ENCODE measurements at regions of chr22 and their contacts with region 1.

Region 1: DNA sequence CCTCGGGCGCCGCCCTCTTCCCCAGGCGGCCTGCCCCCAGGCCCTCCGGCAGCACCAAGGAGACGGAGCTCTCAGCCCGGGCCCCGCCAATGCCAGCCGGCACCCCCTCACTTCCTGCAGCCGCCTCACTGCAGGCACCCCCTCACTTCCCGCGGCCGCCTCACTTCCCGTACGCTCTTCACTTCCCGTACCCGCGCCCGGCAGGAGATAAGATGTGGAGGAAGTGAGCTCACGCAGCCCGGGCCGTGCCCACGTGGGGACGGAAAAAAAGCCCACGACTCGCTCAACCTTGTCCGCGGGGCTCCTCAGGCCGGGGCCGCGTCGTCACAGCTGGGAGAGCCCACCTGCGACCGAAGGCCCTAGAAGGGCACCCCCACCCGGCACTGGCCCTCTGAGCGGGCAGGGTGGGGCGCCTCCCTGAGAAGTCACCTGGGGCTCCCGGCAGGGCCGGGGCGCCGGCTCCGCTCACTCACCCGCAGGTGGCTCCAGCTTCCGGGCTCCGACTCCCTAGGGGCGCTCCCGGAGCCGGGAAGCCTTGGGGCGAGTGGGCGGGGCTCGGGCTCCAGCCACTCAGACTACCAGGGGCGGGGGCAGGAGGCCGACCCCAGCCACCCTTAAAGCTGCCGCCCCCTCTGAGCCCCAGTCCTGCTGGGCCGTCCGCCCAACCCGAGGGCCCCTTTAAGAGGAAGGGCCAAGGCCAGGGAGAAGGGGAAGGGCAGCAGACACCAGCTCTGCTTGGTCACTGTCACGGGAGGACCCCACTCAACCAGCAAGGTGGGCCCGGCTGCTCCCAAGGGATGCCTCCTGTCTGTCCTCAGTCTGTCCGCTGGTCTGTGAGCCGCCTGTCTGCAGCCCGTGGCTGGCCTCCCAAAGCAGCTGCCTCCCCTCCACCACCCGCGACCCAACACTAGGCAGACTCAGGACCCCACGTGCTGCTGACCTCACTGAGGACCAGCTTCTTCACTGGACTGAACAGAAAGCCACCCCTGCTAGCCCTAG is 31.4 kb downstream of the PISD start:
- DNase-seq: peak; percentile 44 to 83 (median 76)
- H3K4me3 ChIP-seq: peak overlapping the region; percentile 61 to 95 (median 80)
- H3K27ac ChIP-seq: peak overlapping the region; percentile 49 to 97 (median 87)
- H3K27me3 ChIP-seq: no peaks in the 10 kb centered on the region
- CTCF ChIP-seq: peak in 16 of 56 donors; percentile 3 to 28 (median 12)

Region 2: GRCh38 chr22:31345331-31346254 is 285.0 kb before region 1 on chr22:
- intact Hi-C with region 1: loop called (anchors 10 kb)
- DNase-seq: peak; percentile 58 to 86 (median 79)
- H3K4me3 ChIP-seq: peak overlapping the region; percentile 54 to 93 (median 79)
- H3K27ac ChIP-seq: peak overlapping the region; percentile 14 to 98 (median 94)
- H3K27me3 ChIP-seq: no peaks in the 10 kb centered on the region
- CTCF ChIP-seq: peak; percentile 25 to 95 (median 74)

Region 3: GRCh38 chr22:31399211-31400028 is 231.2 kb before region 1 on chr22 and contains the start of gene DRG1:
- intact Hi-C with region 1: loop called in 1 of 2 experiments (anchors 10 kb)
- DNase-seq: peak; percentile 96 to 99 (median 97)
- H3K4me3 ChIP-seq: peak within 1 kb of the TSS; percentile 67 to 100 (median 94)
- H3K27ac ChIP-seq: peak within 1 kb of the TSS; percentile 54 to 98 (median 90)
- H3K27me3 ChIP-seq: no peaks in the 10 kb centered on the region
- CTCF ChIP-seq: peak in 46 of 56 donors; percentile 19 to 69 (median 49)
- total RNA-seq, gene DRG1: 27.5 to 88.4 (median 56.9) TPM

Region 4: GRCh38 chr22:31489604-31490495 is 140.8 kb before region 1 on chr22 and contains the start of gene EIF4ENIF1:
- intact Hi-C with region 1: loop called (anchors 5 kb)
- DNase-seq: peak; percentile 77 to 89 (median 84)
- H3K4me3 ChIP-seq: peak within 1 kb of the TSS; percentile 66 to 96 (median 88)
- H3K27ac ChIP-seq: peak within 1 kb of the TSS; percentile 82 to 99 (median 97)
- H3K27me3 ChIP-seq: no peaks in the 10 kb centered on the region
- CTCF ChIP-seq: peak in 14 of 56 donors; percentile 2 to 34 (median 14)
- total RNA-seq, gene EIF4ENIF1: 35.4 to 72.5 (median 51.8) TPM

Region 5: DNA sequence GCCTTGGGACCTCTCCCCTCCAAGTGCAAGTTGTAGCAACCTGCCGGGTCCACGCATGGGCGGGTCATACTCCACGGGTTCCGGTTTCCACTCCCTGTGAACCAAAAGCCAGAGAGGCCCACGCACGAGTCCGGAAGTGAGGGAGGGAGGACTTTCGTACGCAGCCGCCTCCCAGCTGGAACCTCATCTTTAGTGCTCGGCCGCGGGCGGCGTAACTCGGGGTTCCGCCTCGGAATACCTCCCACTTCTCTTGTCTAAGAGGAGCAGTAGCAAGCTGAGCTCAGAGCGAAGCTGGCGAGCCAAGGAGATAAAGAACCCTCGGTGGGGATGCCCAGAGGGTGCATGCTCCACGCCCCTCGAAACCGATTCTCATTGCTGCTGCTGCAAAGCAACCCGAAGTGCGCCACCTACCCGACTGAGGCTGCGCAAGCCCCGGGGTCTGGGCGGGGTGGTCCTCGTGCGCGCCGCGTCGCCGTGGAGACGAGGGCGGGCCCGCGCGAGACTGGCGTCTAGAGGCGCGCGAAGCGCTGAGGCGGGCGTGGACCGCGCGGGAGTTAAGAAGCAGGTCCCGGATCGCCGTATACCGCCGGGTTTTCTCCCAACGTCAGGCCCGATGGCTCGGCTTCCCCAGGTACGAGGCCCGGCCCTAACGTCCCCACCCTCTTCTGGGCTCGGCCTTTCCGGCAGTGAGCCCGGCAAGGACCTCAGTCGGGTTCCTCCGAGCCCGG is 134.5 kb before region 1 on chr22 and contains the start of gene SFI1:
- intact Hi-C with region 1: loop called in 1 of 2 experiments (anchors 5 kb)
- DNase-seq: peak; percentile 89 to 96 (median 94)
- H3K4me3 ChIP-seq: peak within 1 kb of the TSS; percentile 57 to 98 (median 91)
- H3K27ac ChIP-seq: peak within 1 kb of the TSS; percentile 44 to 94 (median 85)
- H3K27me3 ChIP-seq: no peaks in the 10 kb centered on the region
- CTCF ChIP-seq: peak in 53 of 56 donors; percentile 28 to 77 (median 50)
- total RNA-seq, gene SFI1: 34.7 to 122 (median 64.4) TPM

Region 6: DNA sequence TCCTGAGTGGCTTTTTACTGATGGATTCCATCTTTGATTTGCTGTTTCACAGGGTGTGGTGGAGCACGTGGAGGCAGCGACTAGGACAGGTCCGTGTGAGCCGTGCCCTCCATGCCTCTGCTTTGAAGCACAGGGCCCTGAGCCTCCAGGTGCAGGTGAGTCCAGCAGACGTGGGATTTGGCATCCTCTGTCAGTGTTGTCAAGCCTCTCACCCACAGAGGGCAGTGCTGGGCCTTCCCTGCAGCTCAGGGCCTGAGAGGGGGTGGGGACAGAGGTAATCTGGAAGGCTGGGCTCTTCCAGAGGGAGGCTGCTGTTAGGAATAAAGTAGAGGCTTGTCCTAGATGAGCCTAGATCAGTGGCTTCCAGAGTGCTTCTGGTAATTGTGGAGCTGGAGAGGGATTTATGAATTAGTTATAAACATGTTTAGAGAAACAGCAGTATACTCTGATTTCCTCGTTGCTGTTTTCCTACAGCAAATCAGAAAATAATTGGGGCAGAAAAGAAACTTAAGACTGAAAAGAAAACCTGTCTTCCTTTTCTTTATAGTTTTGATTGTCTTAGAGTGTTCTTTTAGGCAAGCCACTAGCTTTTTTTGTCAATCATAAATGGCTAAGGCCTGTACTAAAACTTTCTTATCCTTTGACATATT is 69.3 kb before region 1 on chr22:
- intact Hi-C with region 1: loop called (anchors 1 to 2 kb)
- DNase-seq: peak; percentile 47 to 92 (median 74)
- H3K4me3 ChIP-seq: no peak overlapping the region
- H3K27ac ChIP-seq: peak overlapping the region in 34 of 59 donors; percentile 0 to 70 (median 39)
- H3K27me3 ChIP-seq: no peaks in the 10 kb centered on the region
- CTCF ChIP-seq: peak; percentile 27 to 87 (median 75)

Region 7: GRCh38 chr22:31680861-31681341 is 50.3 kb after region 1 on chr22:
- intact Hi-C with region 1: no loop called
- DNase-seq: no peak
- H3K4me3 ChIP-seq: no peak overlapping the region
- H3K27ac ChIP-seq: peak overlapping the region in 21 of 59 donors; percentile 7 to 74 (median 53)
- H3K27me3 ChIP-seq: no peaks in the 10 kb centered on the region
- CTCF ChIP-seq: no peak

Region 8: GRCh38 chr22:31952459-31952858 is 321.8 kb after region 1 on chr22:
- intact Hi-C with region 1: no loop called
- DNase-seq: no peak
- H3K4me3 ChIP-seq: peak overlapping the region in 27 of 59 donors; percentile 1 to 92 (median 24)
- H3K27ac ChIP-seq: peak overlapping the region in 43 of 59 donors; percentile 10 to 86 (median 63)
- H3K27me3 ChIP-seq: no peaks in the 10 kb centered on the region
- CTCF ChIP-seq: no peak